ENCODE measurements at regions of chr6 and their contacts with region 1.

Region 1: DNA sequence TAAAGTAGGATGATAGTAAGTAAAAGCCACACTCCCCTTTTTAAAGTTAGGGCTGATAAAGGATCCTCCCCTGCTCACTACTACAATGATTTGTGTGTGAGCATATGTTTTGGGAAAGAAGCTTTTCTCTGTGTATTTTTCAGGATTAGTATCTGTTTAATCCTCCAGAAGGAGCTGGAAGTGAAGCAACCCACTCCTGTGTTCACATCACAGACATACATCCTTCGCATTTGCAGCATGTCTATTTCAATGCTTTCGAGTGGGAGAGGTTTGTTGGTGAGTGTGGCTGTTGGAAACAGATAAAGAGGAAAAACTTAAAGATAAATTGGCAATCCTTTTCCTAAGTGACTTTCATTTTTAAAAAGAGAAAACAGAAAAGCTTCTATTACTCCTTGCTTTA is 31.6 kb upstream of the RGS17 start:
- DNase-seq: no peak
- H3K4me3 ChIP-seq: no peak overlapping the region
- H3K27me3 ChIP-seq: no peaks in the 10 kb centered on the region
- CTCF ChIP-seq: no peak

Region 2: DNA sequence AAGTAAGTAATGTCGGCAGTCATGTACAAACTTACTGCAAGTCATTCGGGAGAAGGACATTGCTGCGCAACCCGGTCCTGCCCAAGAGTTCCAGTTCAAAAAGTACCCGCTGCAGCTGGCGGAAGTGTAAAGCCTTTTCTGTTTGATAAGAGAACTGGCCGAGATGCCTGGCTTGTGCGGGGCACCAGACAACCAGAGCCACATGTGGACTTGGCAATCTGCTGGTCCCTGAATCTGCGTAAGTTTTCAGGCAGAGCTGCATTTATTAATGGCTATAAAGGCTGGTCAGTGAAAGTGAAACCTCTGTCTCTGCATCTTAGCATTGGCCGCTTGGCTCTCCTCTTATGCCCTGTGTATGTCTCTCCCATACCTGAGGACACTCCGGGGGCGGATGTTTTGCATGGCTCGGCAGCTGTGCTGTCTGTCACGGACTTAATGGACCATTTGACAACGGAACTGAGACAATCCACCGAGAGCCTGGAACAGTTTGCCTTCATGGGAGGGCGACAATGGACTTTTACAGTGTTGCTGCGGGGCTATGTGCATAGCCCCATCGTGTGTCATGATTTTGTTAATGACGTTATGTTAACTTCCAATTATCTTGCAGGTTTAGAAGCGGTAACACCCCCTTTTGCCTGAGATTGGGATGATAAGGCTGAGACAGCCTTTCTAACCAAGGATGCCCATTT is 11.8 kb before region 1 on chr6:
- CTCF ChIA-PET with region 1: interaction called, 4 read pairs
- POLR2A ChIA-PET with region 1: interaction called, 11 read pairs
- DNase-seq: no peak
- H3K4me3 ChIP-seq: peak overlapping the region; percentile 14; the same call in 1 of the 2 replicates
- H3K27me3 ChIP-seq: peaks cover 2% of the 10 kb centered on the region; the same call in 1 of the 2 replicates
- CTCF ChIP-seq: no peak

Region 3: GRCh38 chr6:153334121-153334520 is 171.5 kb after region 1 on chr6:
- CTCF ChIA-PET with region 1: no interaction called
- POLR2A ChIA-PET with region 1: no interaction called
- DNase-seq: no peak
- H3K4me3 ChIP-seq: no peak overlapping the region
- H3K27me3 ChIP-seq: no peaks in the 10 kb centered on the region
- CTCF ChIP-seq: no peak

Measured in BJ (cell line).